Naive thymus-derived CD8-positive, alpha-beta T cell (primary cell): ENCODE measurements at regions of chr20 and their contacts with region 1.

Region 1: DNA sequence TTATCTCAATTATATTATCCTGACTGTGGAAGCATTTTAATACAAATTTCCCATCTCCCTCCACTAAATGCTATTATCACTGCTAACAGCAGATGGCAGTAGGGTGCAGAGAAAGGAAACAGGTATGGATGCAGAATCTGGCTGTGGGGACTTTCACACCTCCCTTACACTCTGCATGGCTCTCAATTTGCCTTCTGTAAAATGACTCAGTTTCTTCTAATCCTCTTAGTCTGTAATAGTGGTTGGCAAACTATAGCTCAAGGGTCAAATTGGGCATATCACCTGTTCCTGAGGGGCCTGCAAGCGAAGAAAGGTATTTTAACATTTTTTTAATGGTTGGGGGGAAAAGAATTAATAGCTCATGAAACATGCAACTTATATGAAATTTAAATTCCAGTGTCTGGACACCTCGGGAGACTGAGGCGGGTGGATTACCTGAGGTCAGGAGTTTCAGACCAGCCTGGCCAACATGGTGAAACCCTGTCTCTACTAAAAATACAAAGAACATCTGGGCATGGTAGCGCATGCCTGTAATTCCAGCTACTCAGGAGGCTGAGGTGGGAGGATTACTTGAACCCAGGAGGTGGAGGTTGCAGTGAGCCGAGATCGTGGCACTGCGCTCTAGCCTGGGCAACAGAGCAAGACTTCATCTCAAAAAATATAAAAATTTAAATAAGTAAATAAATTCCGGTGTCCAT is 83.5 kb downstream of the ZMYND8 start:
- DNase-seq: peak in 9 of 10 donors; percentile 5 to 72 (median 53)
- ATAC-seq: peak; percentile 66 to 80
- H3K4me3 Mint-ChIP-seq: no peak overlapping the region
- H3K27ac Mint-ChIP-seq: peak overlapping the region in 4 of 10 donors; percentile 2 to 95 (median 65)
- H3K4me1 Mint-ChIP-seq: peaks cover 10 to 36% (median 27%) of the 10 kb centered on the region in 4 donors
- H3K27me3 Mint-ChIP-seq: no peaks in the 10 kb centered on the region

Region 2: DNA sequence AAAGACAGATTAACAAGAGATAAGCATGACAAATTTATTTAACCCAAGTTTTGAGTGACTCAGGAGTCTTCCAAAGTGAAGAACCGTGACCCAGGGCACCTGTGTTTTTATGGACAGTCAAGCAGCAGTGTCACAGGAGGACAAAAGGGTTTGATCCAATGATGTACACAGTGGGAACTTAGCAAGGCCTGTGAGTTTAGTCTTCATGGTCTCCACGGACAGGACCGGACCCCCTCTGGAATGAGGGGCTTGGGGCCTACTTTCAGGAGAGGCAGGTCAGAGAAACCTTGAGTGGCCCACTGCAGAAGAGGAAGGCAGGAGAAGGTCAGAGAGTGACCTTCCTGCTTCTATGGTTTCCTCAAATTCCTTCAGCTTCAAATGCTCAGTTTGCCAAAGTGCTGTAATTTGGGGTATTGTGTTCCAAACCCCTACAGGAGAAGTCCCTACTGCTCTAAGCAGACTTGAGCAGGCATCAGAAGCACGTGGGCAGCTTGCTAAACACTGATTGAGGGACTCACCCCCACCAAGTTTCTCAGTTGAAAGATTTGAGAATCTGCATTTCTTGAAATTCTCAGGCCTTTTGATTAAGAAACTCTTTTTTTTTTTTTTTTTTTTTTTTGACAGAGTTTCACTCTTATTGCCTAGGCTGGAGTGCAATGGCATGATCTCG is 109.8 kb after region 1 on chr20:
- POLR2A ChIA-PET with region 1: interaction called, 18 read pairs
- DNase-seq: no peak
- ATAC-seq: no peak
- H3K4me3 Mint-ChIP-seq: no peak overlapping the region
- H3K27ac Mint-ChIP-seq: no peak overlapping the region
- H3K4me1 Mint-ChIP-seq: peaks cover 4 to 19% (median 14%) of the 10 kb centered on the region in 4 donors
- H3K27me3 Mint-ChIP-seq: no peaks in the 10 kb centered on the region